ENCODE measurements at regions of chr3 and their contacts with region 1.

Region 1: DNA sequence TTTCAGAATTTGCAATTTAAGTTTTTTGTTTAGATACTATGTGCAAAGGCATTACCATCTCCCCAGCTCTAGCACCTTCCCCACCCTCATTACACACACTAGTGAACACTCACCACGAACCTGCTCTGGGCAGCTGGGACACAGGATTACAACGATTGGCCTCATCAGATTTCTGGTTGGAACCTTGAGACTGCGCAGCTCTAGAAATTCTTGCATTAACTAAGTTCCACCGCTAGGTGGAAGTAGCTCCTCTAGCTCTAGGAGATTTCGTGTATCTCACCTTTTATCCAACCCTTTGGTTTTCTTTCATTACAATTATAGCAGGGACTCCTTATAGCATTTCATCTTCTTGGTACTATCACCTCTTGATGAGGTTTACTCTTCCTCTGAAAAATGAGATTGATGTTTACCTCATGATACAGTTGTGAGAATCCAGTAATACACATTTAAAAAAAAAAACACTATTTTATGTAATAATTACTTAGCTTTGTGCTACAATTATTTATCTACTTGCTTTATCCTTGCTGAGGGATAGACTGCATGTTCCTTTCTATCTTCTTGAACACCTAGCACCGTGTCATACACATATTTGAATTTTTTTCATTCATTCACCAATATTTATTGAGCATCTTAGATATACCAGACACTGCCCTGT is 28.7 kb upstream of the PLOD2 start:
- DNase-seq: peak; percentile 83

Region 2: GRCh38 chr3:146065573-146066006 is 124.1 kb before region 1 on chr3:
- in situ Hi-C with region 1: loop called (anchors 25 kb)
- DNase-seq: peak; percentile 68

Region 3: GRCh38 chr3:146326670-146327543 is 137.3 kb after region 1 on chr3:
- in situ Hi-C with region 1: loop called (anchors 10 kb)
- DNase-seq: peak; percentile 81

Region 4: DNA sequence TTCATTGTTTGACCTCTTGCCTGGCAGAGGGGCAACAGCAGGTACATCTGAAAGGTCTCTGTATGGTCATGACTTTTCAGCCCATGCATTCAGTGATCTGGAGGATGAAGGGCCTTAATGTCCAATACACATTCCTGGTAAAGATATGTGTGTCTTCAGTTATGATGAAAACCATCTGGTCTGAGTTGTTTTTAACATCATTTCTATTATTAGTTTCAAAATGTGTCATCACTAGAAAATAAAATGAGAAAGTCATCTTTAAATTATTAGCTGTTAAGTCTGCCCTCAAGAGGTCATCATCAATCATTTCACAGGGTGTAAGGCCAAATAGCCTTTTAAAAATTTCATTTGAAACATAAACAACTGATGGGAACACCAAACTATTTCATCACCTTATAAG is 153.3 kb after region 1 on chr3:
- in situ Hi-C with region 1: no loop called
- DNase-seq: no peak

Region 5: DNA sequence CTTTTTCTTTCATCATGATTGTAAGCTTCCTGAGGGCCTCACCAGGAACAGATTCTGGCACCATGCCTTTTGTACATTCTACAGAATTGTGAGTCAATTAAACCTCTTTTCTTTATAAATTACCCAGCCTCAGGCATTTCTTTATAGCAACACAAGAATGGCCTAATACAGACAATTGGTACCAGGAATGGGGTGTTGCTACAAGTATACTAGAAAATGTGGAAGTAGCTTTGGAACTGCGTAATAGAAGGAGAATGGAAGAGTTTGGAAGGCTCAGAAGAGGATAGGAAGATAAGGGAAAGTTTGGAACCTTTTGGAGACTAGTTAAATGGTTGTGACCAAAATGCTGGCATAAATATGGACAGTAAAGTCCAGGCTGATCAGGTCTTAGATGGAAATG is 170.2 kb after region 1 on chr3:
- in situ Hi-C with region 1: no loop called
- DNase-seq: no peak

Region 6: GRCh38 chr3:146374146-146374545 is 184.5 kb after region 1 on chr3:
- in situ Hi-C with region 1: no loop called
- DNase-seq: no peak